PC-9 (cell line): ENCODE measurements at regions of chr7 and their contacts with region 1.

Region 1: DNA sequence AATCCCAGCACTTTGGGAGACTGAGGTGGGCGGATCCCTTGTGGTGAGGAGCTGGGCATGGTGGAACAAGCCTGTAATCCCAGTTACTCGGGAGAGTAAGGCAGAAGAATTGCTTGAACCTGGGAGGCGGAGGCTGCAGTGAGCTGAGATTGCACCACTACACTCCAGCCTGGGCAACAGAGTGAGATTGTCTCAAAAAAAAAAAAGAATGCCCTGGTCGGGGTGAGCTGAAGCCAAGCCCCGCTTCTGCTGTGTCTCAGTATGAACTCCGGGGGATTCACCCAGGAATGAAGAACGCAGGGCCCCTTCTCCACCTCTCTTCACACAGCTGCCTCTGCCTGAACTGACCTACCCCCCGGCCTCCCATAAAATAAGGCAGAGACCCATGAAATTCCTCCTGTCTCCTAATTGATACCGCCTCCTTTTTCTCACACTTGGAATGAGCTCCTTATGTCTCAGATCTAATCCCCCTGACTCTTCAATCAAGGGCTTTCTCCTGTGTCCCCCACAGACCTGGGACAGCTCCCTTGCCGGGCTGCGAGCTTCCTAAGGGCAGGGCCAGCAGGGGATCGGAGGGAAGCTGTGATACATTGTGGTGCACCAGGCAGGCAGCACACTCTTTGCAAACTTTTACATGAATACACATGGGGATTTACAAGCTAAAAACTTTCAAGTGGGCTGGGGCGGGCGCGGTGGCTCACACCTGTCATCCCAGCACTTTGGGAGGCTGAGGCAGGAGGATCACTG is 911 bp upstream of the ZP3 start:
- DNase-seq: no peak
- H3K4me3 ChIP-seq: no peak overlapping the region
- H3K27ac ChIP-seq: peak overlapping the region; percentile 78
- H3K4me1 ChIP-seq: peaks cover 48% of the 10 kb centered on the region
- H3K27me3 ChIP-seq: no peaks in the 10 kb centered on the region
- CTCF ChIP-seq: no peak

Region 2: DNA sequence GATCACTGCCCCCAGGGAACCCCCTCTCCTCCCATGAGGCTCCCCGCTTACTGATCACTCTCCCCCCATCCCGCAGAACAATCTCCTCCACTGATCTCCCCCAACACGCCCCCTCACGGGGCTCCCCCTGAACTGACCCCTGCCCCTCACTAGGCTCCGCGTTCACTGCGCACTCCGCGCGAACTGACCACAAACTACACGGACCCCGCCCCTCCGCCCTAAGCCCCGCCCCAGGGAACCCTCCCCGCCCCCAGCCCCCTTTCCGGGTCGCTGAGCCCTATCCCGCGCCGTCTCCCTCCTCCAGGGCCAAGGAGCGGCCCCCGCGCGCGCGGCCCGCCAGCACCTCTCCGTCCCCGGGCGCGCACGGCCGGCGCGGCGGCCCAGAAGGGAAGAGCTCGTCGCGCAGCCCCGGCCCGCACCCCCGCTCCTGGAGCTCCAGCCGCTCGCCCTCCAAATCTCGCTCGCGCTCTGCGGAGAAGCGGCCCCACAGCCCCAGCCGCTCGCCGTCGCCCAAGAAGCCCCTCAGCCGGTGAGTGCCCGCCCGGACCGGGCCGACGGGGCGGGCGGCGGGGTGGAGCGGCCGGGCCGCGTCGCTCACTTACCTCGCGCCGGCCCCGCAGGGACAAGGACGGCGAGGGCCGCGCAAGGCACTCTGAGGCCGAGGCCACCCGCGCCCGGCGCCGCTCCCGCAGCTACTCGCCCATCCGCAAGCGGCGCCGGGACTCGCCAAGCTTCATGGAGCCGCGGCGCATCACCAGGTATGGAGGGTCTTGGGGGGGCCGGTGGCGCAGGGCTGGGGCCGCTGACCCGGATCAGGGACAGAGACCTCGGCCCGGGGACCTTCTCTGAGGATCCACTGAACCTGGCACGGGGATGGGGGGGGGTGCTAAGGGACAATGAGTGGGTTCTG is 141.2 kb before region 1 on chr7:
- CTCF ChIA-PET with region 1: no interaction called
- POLR2A ChIA-PET with region 1: interaction called, 32 read pairs
- intact Hi-C with region 1: no loop called
- DNase-seq: no peak
- H3K4me3 ChIP-seq: no peak overlapping the region
- H3K27ac ChIP-seq: no peak overlapping the region
- H3K4me1 ChIP-seq: no peaks in the 10 kb centered on the region
- H3K27me3 ChIP-seq: peaks cover 41% of the 10 kb centered on the region
- CTCF ChIP-seq: no peak

Region 3: DNA sequence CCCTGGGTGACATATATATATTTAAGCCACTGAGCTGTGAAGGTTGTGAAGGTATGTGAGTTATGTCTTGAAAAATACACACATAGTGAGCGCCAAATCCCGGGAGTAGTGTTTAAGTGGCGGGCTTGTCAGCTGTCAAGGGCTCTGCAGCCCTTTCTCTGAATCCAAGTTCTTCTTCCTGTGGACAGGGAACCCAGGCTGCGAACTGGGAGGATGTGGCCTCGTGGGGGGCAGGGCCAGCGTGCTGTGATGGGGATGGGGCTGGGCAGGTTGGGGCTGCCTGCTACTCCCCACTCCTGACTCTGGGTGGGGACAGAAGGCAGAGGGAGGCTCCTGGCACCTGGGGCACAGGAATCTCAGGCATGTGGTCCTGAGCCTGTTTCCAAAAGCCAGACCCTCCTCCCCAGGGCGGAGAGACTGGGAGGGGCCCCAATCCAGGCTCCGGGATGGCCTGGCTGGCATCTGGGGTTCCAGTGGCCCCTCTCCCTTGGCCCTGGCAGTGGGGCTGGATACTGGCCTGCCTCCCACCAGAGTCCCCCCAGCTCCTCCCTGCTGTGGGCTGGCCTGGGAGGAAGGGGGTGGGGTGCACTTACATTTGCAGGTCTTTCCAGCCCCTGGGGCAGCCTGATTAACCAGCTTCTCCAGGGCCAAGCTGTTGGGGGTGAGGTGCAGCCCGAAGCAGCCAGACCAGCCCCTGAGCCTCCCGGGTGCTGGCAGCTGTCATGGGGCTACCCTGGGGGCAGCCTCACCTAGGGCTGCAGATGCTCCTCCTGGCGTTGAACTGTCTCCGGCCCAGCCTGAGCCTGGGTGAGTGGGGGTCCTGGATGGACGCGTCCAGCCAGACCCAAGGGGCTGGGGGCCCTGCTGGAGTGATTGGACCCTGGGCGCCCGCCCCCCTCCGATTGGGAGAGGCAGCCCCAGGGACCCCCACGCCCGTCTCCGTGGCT is 86.4 kb after region 1 on chr7 and contains the start of gene UPK3B:
- CTCF ChIA-PET with region 1: no interaction called
- POLR2A ChIA-PET with region 1: no interaction called
- intact Hi-C with region 1: loop called (anchors 2 kb)
- DNase-seq: peak; percentile 85 to 95
- H3K4me3 ChIP-seq: peak within 1 kb of the TSS; percentile 44
- H3K27ac ChIP-seq: peak within 1 kb of the TSS; percentile 48
- H3K4me1 ChIP-seq: peaks cover 28% of the 10 kb centered on the region
- H3K27me3 ChIP-seq: no peaks in the 10 kb centered on the region
- CTCF ChIP-seq: no peak; the same call in 1 of the 2 replicates
- total RNA-seq, gene UPK3B: 16.8 and 19.2 TPM in 2 replicates